PC-9 (cell line): ENCODE measurements at regions of chr12 and their contacts with region 1.

Region 1: DNA sequence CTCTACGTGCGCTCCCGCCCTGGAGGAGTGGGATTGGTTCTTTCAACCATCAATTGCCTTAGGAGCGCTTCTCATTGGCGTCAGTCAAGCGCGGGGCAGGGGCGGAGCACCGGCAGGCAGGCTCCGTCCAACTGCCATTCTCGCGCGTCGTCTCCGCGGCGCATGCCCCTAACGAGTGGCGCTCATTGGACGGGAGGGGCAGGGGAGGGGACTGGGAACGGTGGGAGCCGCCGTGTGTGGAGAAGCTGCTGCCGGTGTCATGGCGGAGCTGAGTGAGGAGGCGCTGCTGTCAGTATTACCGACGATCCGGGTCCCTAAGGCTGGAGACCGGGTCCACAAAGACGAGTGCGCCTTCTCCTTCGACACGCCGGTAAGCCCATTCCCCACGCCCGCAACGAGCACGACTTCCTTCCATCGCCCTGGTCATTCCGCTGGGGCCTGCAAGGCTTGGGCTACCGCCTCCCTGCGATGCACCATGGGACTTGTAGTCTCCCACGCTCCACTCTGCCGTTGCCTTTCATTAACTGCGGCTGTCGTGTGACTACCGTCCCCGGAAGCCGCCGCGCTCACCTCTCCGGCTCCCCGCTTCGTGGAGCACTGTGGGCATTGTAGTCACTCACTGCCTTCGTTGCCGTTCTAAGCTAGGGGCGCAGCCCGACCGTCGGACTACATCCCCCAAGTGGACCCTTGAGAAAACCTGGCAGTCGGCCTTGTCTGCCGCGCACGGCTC is at the start of gene USP5:
- DNase-seq: peak; percentile 99 to 100
- H3K4me3 ChIP-seq: peak within 1 kb of the TSS; percentile 83
- H3K27ac ChIP-seq: peak within 1 kb of the TSS; percentile 69
- H3K4me1 ChIP-seq: peaks cover 25% of the 10 kb centered on the region
- H3K27me3 ChIP-seq: no peaks in the 10 kb centered on the region
- CTCF ChIP-seq: no peak
- total RNA-seq, gene USP5: 267 and 308 TPM in 2 replicates

Region 2: DNA sequence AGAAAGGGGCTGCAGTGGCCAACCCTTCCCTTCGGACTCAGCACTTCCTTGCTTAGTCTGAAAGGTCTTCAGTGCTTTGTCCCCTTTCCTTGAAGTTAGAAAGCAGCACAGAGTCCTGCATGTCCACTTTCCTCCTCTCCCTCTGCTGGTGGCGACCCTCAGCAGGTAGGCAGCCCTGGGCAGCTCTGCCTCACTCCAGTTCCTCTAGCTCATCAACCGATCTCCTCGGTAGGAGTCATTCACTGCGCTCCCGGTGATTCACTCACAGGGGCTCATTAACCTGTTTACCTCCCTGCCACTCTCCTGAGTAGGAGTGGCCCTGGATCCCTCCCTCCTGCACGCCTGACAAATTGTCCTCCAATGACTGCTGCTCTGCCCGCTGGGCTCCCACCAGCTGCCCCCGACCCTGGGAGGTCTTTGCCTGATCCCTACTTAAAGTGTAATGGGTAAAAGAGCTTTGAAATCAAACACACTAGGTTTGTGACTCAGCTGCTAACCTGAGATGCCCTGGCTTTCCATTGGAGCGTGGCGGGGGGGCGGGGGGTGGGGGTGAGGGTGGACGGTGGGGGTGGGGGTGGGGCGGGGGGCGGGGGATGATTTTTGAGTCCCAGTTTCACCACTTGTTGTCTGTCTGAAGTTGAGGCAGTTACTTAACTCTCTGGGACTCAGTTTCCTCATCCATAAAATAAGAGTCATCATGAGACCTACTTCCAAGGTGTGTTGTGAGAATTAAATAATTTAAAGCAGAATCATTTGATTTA is 480.9 kb before region 1 on chr12:
- CTCF ChIA-PET with region 1: no interaction called
- POLR2A ChIA-PET with region 1: interaction called, 18 read pairs
- intact Hi-C with region 1: no loop called
- DNase-seq: peak; percentile 99
- H3K4me3 ChIP-seq: peak overlapping the region; percentile 62
- H3K27ac ChIP-seq: peak overlapping the region; percentile 89
- H3K4me1 ChIP-seq: peaks cover 57% of the 10 kb centered on the region
- H3K27me3 ChIP-seq: no peaks in the 10 kb centered on the region
- CTCF ChIP-seq: peak; percentile 43; the same call in 1 of the 2 replicates

Region 3: DNA sequence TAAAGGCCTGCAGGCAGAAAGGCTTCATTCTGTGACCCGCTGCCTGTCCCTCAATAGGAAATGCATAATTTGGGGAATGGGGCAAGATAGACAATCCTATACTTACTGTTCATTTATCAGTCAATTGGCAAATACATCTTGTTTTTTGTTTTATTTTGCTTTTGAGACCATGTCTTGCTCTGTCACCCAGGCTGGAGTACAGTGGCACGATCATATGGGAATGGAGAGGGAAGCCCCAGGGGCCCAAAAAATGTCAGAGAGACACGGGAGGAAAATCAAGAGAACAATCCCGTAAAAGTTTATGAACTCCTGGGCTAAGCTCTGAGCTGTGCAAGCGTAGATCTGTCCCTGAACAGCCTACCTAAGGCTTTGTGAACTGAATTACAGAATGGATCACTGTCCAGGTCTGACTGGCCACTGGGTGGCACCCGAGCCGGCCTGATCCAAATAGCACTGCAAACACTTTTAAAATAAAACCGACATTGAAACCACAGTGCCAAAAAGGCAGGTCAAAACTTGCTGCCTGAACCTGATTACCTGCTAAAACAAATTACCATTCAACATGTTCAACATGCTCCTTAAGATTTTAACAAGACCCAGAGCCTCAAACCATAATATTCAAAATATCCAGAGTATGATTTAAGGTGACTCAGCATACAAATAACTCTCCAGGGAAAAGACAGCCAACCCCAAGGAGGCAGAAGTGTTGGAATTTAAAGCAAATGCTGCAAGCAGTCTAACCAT is 116.5 kb before region 1 on chr12:
- CTCF ChIA-PET with region 1: no interaction called
- POLR2A ChIA-PET with region 1: interaction called, 10 read pairs
- intact Hi-C with region 1: no loop called
- DNase-seq: peak; percentile 44 to 70
- H3K4me3 ChIP-seq: no peak overlapping the region
- H3K27ac ChIP-seq: no peak overlapping the region
- H3K4me1 ChIP-seq: no peaks in the 10 kb centered on the region; the same call in 1 of the 2 replicates
- H3K27me3 ChIP-seq: no peaks in the 10 kb centered on the region
- CTCF ChIP-seq: peak; percentile 84

Region 4: DNA sequence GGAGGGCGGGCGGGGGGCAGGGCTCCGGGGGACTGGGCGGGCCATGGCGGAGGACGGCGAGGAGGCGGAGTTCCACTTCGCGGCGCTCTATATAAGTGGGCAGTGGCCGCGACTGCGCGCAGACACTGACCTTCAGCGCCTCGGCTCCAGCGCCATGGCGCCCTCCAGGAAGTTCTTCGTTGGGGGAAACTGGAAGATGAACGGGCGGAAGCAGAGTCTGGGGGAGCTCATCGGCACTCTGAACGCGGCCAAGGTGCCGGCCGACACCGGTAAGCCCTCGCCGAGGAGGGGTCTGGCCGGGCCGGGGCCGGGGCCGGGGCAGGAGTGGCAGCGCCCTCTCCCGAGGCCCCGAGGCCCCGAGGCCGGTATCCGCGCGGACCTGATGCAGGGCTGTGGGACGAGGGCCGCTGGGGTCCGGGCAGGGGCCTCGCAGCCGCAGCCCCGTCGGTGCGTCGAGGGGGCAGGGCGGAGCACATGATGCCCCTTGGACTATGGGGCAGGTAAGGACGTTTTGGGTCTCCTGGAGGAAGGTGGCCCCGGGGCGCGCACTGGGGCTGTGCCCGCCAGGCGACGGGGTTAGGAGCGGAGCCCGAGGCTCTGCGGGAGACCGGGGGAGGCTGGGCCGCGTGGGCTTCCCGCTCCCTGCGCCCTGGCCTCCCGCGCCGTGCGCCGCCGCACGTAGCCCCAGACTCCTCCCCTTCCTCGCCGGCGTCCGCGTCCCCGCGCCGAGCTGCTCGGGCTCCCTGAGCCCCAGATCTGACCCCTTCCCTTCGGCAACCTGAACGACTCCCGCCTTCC is 15.5 kb after region 1 on chr12 and contains the start of gene TPI1:
- CTCF ChIA-PET with region 1: interaction called, 9 read pairs
- POLR2A ChIA-PET with region 1: interaction called, 16 read pairs
- intact Hi-C with region 1: loop called (anchors 1 kb)
- DNase-seq: peak; percentile 46 to 82
- H3K4me3 ChIP-seq: peak within 1 kb of the TSS; percentile 97
- H3K27ac ChIP-seq: peak within 1 kb of the TSS; percentile 72
- H3K4me1 ChIP-seq: peaks cover 32% of the 10 kb centered on the region
- H3K27me3 ChIP-seq: no peaks in the 10 kb centered on the region
- CTCF ChIP-seq: no peak; the same call in 1 of the 2 replicates
- total RNA-seq, gene TPI1: 1,080 and 1,199 TPM in 2 replicates

Region 5: GRCh38 chr12:6904280-6905278 is 52.5 kb after region 1 on chr12 and contains the start of gene LRRC23:
- CTCF ChIA-PET with region 1: no interaction called
- POLR2A ChIA-PET with region 1: no interaction called
- intact Hi-C with region 1: loop called (anchors 2 kb)
- DNase-seq: peak; percentile 93 to 98
- H3K4me3 ChIP-seq: peak within 1 kb of the TSS; percentile 86
- H3K27ac ChIP-seq: 0 out of 2 replicates have a peak within 1 kb of the TSS, but pooled peaks have one; percentile 1
- H3K4me1 ChIP-seq: peaks cover 22% of the 10 kb centered on the region
- H3K27me3 ChIP-seq: no peaks in the 10 kb centered on the region
- CTCF ChIP-seq: no peak
- total RNA-seq, gene LRRC23: 29.3 and 38.8 TPM in 2 replicates